Endothelial cell of umbilical vein (primary cell): ENCODE measurements at regions of chr1 and their contacts with region 1.

Region 1: DNA sequence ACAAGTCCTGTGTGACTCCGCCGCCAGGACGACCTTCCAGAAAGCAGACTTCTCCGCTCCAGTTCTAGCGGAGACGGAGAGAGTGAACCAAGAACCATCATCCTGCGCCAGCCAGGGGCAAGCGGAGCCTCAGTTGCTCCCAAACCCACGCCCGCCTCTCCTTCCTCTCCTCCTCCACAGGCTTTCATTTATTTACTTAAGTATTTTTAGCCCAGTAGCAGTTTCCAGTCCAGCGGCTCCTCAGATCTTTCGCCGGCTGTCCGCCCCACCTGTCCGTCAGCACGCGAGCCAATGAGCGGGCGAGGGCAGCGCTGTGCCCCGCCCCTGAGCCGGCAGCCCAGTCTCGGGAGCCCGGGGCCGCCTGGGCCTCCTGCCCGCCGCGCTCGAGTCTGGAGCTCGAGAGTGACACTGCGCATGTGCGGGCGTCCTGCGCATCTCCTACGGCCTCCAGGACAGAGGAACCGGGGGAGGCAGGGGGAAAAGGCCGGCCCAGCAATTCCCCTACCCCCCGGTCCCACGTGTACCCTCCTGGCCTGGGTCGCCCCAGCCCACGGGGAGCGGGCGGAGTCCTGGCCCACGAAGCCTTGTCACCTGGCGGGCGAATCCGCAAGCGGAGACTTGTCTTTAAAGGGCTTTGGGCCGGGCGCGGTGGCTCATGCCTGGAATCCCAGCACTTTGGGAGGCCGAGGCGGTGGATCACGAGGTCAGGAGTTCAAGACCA is at the start of gene FALEC:
- DNase-seq: peak; percentile 97
- H3K4me3 ChIP-seq: peak within 1 kb of the TSS; percentile 39 to 77 (median 48)
- H3K27ac ChIP-seq: peak within 1 kb of the TSS; percentile 9
- H3K4me1 ChIP-seq: peaks cover 6% of the 10 kb centered on the region
- H3K27me3 ChIP-seq: no peaks in the 10 kb centered on the region
- CTCF ChIP-seq: no peak
- POLR2A ChIP-seq: peak; percentile 44
- total RNA-seq, gene FALEC: not detected in 2 replicates

Region 2: DNA sequence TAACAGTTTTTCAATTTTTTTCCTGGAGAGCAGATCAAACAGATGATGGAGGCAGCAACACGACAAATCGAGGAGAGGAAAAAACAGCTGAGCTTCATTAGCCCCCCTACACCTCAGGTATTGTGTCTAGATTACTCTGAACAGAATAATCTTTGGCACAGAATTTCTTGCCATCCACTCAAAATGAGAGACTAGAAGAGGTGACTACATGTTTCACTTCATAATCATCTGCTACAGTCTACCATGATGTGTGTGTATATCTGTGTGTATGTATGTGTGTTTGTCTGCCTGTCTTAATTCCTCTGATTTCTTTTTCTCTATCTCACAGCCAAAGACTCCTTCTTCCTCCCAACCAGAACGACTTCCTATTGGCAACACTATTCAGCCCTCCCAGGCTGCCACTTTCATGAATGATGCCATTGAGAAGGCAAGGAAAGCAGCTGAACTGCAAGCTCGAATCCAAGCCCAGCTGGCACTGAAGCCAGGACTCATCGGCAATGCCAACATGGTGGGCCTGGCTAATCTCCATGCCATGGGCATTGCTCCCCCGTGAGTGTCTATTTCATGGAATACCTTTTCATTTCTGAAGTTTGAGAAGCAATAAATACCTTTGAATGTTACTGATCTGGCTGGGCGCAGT is 182.7 kb before region 1 on chr1:
- CTCF ChIA-PET with region 1: no interaction called
- POLR2A ChIA-PET with region 1: no interaction called
- dilution Hi-C with region 1: no loop called
- intact Hi-C with region 1: no loop called
- DNase-seq: no peak
- H3K4me3 ChIP-seq: no peak overlapping the region
- H3K27ac ChIP-seq: no peak overlapping the region
- H3K4me1 ChIP-seq: no peaks in the 10 kb centered on the region
- H3K27me3 ChIP-seq: no peaks in the 10 kb centered on the region
- CTCF ChIP-seq: no peak
- POLR2A ChIP-seq: no peak

Region 3: GRCh38 chr1:150363426-150364230 is 151.9 kb before region 1 on chr1 and contains the start of gene RPRD2:
- CTCF ChIA-PET with region 1: no interaction called
- POLR2A ChIA-PET with region 1: interaction called, 3 read pairs
- dilution Hi-C with region 1: no loop called
- intact Hi-C with region 1: loop called (anchors 5 kb)
- DNase-seq: peak; percentile 99
- H3K4me3 ChIP-seq: peak within 1 kb of the TSS; percentile 58 to 95 (median 84)
- H3K27ac ChIP-seq: peak within 1 kb of the TSS; percentile 75
- H3K4me1 ChIP-seq: peaks cover 18% of the 10 kb centered on the region
- H3K27me3 ChIP-seq: no peaks in the 10 kb centered on the region
- CTCF ChIP-seq: no peak
- POLR2A ChIP-seq: peak; percentile 97
- total RNA-seq, gene RPRD2: 23.9 and 24.5 TPM in 2 replicates

Region 4: DNA sequence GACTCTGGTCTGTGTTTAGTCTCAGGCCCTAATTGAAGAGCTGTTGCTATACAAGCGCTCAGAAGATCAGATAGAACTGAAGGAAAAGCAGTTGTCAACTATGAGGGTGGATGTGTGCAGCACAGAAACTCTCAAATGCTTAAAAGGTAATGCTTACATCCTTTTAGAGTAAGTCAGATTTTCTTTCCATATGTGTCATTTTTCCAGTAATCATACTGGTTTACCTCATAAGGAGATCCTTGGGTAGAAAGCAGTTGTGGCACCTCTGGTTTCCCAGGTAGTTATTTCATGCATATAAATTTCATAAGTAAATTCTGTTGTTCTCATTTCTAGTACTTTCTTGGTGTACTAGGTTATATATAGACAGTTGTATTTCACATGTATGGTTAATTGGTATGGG is 71.3 kb before region 1 on chr1:
- CTCF ChIA-PET with region 1: no interaction called
- POLR2A ChIA-PET with region 1: no interaction called
- dilution Hi-C with region 1: no loop called
- intact Hi-C with region 1: no loop called
- DNase-seq: no peak
- H3K4me3 ChIP-seq: no peak overlapping the region
- H3K27ac ChIP-seq: no peak overlapping the region
- H3K4me1 ChIP-seq: no peaks in the 10 kb centered on the region
- H3K27me3 ChIP-seq: no peaks in the 10 kb centered on the region
- CTCF ChIP-seq: no peak
- POLR2A ChIP-seq: no peak

Region 5: DNA sequence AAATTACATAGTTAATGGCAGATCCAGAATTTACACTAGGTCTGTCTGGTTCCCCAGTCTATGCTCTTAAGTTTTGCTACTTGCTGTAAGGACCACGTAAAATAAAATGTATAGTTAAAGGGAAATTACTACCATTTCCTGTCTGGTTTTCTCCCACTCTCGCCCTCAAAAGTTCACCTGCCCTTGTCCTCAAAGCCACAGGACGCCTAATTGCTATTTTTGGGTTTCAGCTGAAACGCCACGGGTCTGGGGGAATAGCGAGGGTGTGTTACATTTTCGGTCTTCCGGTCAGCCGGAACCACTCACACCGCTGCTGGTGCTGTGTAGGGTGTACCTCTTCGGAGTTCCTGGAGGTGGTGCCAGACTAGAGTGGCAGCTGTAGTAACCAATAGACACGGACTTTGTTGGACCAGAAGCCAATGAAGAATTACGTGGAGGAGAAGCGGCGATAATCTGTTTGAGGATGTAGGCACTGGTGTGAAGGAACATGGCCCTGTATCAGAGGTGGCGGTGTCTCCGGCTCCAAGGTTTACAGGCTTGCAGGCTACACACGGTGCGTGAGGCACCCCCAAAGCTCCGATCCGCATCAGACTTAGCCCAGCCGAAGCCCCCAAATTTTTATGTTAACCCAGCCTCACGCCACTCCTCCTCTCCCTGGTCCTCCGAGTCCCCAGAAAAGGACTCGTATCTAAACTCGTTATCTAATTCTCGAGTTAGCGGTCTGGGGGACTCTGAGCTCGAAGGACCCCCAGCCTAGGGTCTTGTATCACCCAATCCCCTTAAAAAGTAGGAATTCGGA is 28.3 kb before region 1 on chr1 and contains the start of gene TARS2:
- CTCF ChIA-PET with region 1: interaction called, 5 read pairs
- POLR2A ChIA-PET with region 1: no interaction called
- dilution Hi-C with region 1: no loop called
- intact Hi-C with region 1: loop called (anchors 2 kb)
- DNase-seq: peak; percentile 99
- H3K4me3 ChIP-seq: peak within 1 kb of the TSS; percentile 53 to 81 (median 65)
- H3K27ac ChIP-seq: peak within 1 kb of the TSS; percentile 63
- H3K4me1 ChIP-seq: peaks cover 7% of the 10 kb centered on the region
- H3K27me3 ChIP-seq: no peaks in the 10 kb centered on the region
- CTCF ChIP-seq: no peak
- POLR2A ChIP-seq: peak; percentile 84
- total RNA-seq, gene TARS2: 20.6 and 21.5 TPM in 2 replicates

Region 6: DNA sequence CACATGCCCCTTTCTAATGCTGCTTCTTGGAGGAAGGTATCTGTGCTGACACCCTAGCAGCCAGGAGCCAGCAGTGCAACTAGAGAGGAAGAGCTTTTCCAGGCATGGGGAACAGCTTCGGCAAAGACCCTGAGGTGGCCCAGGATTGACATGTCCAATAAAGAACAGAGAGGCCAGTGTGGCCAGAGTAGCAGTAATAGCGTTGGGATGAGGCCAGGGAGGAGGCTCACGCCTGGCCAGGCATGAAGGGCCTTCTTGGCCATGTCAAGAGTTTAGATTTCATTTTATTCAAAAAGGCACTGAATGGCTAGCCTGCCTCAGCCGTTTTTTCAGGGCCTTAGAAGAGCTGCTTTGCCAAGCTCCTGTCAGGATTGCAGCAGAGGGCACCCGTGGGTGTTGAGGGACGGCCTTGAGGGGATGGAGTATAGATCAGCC is 17.4 kb after region 1 on chr1:
- CTCF ChIA-PET with region 1: interaction called, 24 read pairs
- POLR2A ChIA-PET with region 1: no interaction called
- dilution Hi-C with region 1: no loop called
- intact Hi-C with region 1: loop called (anchors 1 kb)
- DNase-seq: no peak
- H3K4me3 ChIP-seq: no peak overlapping the region
- H3K27ac ChIP-seq: no peak overlapping the region
- H3K4me1 ChIP-seq: no peaks in the 10 kb centered on the region
- H3K27me3 ChIP-seq: no peaks in the 10 kb centered on the region
- CTCF ChIP-seq: no peak
- POLR2A ChIP-seq: no peak

Region 7: GRCh38 chr1:150537732-150538684 is 22.5 kb after region 1 on chr1:
- CTCF ChIA-PET with region 1: interaction called, 24 read pairs
- POLR2A ChIA-PET with region 1: no interaction called
- dilution Hi-C with region 1: no loop called
- intact Hi-C with region 1: no loop called
- DNase-seq: peak; percentile 39
- H3K4me3 ChIP-seq: no peak overlapping the region
- H3K27ac ChIP-seq: no peak overlapping the region
- H3K4me1 ChIP-seq: no peaks in the 10 kb centered on the region
- H3K27me3 ChIP-seq: no peaks in the 10 kb centered on the region
- CTCF ChIP-seq: no peak
- POLR2A ChIP-seq: no peak

Region 8: DNA sequence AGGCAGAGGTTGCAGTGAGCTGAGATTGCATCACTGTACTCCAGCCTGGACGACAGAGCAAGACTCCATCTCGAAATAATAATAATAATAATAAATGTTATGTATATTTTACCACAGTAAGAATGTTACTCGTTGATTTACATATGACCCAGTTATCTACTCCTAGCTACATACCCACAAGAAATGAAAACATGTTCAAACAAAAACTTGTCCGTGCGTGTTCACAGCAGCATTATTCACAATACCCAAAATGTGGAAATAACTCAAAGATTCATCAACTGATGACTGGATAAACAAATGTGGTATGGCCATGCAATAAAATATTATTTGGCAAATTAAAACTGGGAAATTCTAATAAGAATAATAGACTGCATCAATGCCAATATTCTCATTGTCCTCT is 145.7 kb after region 1 on chr1:
- CTCF ChIA-PET with region 1: no interaction called
- POLR2A ChIA-PET with region 1: no interaction called
- dilution Hi-C with region 1: no loop called
- intact Hi-C with region 1: no loop called
- DNase-seq: no peak
- H3K4me3 ChIP-seq: no peak overlapping the region
- H3K27ac ChIP-seq: no peak overlapping the region
- H3K4me1 ChIP-seq: no peaks in the 10 kb centered on the region
- H3K27me3 ChIP-seq: no peaks in the 10 kb centered on the region
- CTCF ChIP-seq: no peak
- POLR2A ChIP-seq: no peak